ENCODE measurements at regions of chr10 and their contacts with region 1.

Region 1: DNA sequence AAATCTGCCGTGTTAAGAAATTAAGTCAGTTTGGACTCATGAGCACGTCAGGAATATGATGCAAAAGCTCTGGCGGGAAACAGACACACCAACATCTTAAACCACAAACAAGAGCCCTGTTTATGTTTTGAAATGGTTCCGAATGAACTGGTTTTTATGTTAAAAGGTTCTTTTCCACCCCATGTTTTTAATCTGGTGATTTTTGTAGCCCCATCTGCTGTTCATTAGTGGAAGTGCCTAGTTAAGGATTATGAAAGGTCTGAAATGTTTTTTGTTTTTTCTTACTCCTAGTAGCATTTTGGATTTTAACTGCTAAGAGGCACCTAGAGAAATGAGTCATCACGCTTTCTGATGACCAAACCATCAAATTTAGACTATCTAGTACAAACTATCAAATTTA is 404.1 kb upstream of the MKI67 start:
- DNase-seq: no peak
- H3K4me3 ChIP-seq: no peak overlapping the region
- H3K27ac ChIP-seq: no peak overlapping the region
- H3K4me1 ChIP-seq: no peaks in the 10 kb centered on the region
- H3K27me3 ChIP-seq: no peaks in the 10 kb centered on the region
- CTCF ChIP-seq: peak; percentile 43

Region 2: GRCh38 chr10:128324077-128324827 is 206.0 kb before region 1 on chr10:
- intact Hi-C with region 1: loop called (anchors 10 kb)
- DNase-seq: no peak
- H3K4me3 ChIP-seq: no peak overlapping the region
- H3K27ac ChIP-seq: no peak overlapping the region
- H3K4me1 ChIP-seq: no peaks in the 10 kb centered on the region
- H3K27me3 ChIP-seq: no peaks in the 10 kb centered on the region
- CTCF ChIP-seq: no peak